SK-N-SH (cell line): ENCODE measurements at regions of chr9 and their contacts with region 1.

Region 1: DNA sequence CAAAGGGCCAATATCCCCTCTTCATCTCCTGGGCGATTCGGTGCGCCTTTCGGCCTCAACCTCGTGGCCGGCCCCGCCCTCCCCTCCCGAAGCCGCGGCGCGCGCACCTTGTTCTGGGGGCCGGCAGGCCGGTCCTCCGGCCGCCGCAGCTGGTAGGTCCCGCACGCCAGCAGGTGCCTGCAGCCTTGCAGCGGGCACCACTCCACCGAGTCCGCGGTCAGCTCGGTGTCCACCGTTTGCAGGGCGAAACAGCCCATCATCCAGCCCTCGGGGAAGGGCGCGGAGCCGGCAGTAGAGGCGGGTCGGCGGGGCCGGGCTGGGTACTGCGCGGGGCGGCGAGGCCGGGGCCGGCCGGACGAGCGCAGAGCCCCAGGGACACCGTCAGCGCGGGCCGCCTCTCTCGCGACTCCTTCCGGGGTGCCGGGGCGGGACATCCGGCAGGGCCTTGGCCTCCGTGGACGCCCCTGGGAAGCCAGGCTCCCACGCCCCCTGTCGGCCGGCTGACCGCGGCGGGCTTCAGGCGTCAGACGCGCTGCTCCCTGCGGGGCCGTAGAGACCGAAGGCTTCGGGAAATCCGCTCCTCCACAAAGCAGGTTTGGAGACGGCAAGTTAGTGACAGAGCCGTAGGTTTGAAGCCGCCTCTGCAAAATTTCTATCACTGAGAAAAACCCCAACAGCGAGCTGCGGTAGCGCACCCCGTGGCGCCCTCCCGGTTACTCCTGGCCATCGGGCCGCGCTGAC is at the start of gene DPH7:
- DNase-seq: peak; percentile 100
- H3K4me3 ChIP-seq: peak within 1 kb of the TSS; percentile 95 to 97
- H3K27ac ChIP-seq: peak within 1 kb of the TSS; percentile 68 to 89
- H3K4me1 ChIP-seq: peaks cover 6 to 14% of the 10 kb centered on the region in 2 experiments; a peak in 3 of 4 replicates
- H3K27me3 ChIP-seq: no peaks in the 10 kb centered on the region
- CTCF ChIP-seq: peak; percentile 84
- EP300 ChIP-seq: no peak
- RAD21 ChIP-seq: 0 out of 2 replicates have a peak, but pooled peaks have one; percentile 7
- polyA plus RNA-seq, gene DPH7: 59.9 and 84.3 TPM in 2 replicates

Region 2: GRCh38 chr9:137551651-137552384 is 26.9 kb before region 1 on chr9 and contains the start of gene MRPL41:
- CTCF ChIA-PET with region 1: interaction called, 10 read pairs
- POLR2A ChIA-PET with region 1: no interaction called
- DNase-seq: peak; percentile 99
- H3K4me3 ChIP-seq: peak within 1 kb of the TSS; percentile 73 to 83
- H3K27ac ChIP-seq: peak within 1 kb of the TSS; percentile 40 to 72; a peak in 3 of 4 replicates
- H3K4me1 ChIP-seq: peaks cover 5 to 12% of the 10 kb centered on the region in 2 experiments; a peak in 1 of 4 replicates
- H3K27me3 ChIP-seq: no peaks in the 10 kb centered on the region
- CTCF ChIP-seq: no peak
- EP300 ChIP-seq: no peak
- RAD21 ChIP-seq: no peak
- polyA plus RNA-seq, gene MRPL41: 39.4 and 58.9 TPM in 2 replicates

Region 3: GRCh38 chr9:137590462-137591383 is 12.0 kb after region 1 on chr9 and contains the start of gene ZMYND19:
- CTCF ChIA-PET with region 1: interaction called, 27 read pairs
- POLR2A ChIA-PET with region 1: interaction called, 8 read pairs
- DNase-seq: peak; percentile 100
- H3K4me3 ChIP-seq: peak within 1 kb of the TSS; percentile 79 to 86
- H3K27ac ChIP-seq: peak within 1 kb of the TSS in 1 of 2 experiments; percentile 28; a peak in 1 of 4 replicates
- H3K4me1 ChIP-seq: peaks cover 9 to 18% of the 10 kb centered on the region in 2 experiments; a peak in 2 of 4 replicates
- H3K27me3 ChIP-seq: no peaks in the 10 kb centered on the region
- CTCF ChIP-seq: no peak
- EP300 ChIP-seq: no peak
- RAD21 ChIP-seq: no peak
- polyA plus RNA-seq, gene ZMYND19: 39.3 and 43.1 TPM in 2 replicates

Region 4: GRCh38 chr9:137804908-137805630 is 226.4 kb after region 1 on chr9:
- CTCF ChIA-PET with region 1: no interaction called
- POLR2A ChIA-PET with region 1: no interaction called
- DNase-seq: no peak
- H3K4me3 ChIP-seq: no peak overlapping the region
- H3K27ac ChIP-seq: no peak overlapping the region
- H3K4me1 ChIP-seq: no peaks in the 10 kb centered on the region
- H3K27me3 ChIP-seq: no peaks in the 10 kb centered on the region
- CTCF ChIP-seq: no peak
- EP300 ChIP-seq: no peak
- RAD21 ChIP-seq: no peak